Common myeloid progenitor, CD34-positive (primary cell): ENCODE measurements at regions of chr9 and their contacts with region 1.

Region 1: GRCh38 chr9:72871685-72872084 is 81.2 kb downstream of the ALDH1A1 start:
- DNase-seq: peak; percentile 29 to 62 (median 47)
- H3K4me3 ChIP-seq: peak overlapping the region in 2 of 7 experiments; percentile 24 to 51
- H3K27ac ChIP-seq: no peak overlapping the region
- H3K4me1 ChIP-seq: peaks cover 0 to 3% (median 0%) of the 10 kb centered on the region in 4 experiments
- H3K27me3 ChIP-seq: no peaks in the 10 kb centered on the region

Region 2: GRCh38 chr9:72807765-72808445 is 63.8 kb before region 1 on chr9:
- CTCF ChIA-PET with region 1: no interaction called
- POLR2A ChIA-PET with region 1: no interaction called
- DNase-seq: no peak
- H3K4me3 ChIP-seq: no peak overlapping the region
- H3K27ac ChIP-seq: no peak overlapping the region
- H3K4me1 ChIP-seq: no peaks in the 10 kb centered on the region
- H3K27me3 ChIP-seq: no peaks in the 10 kb centered on the region

Region 3: GRCh38 chr9:72856972-72857623 is 14.6 kb before region 1 on chr9:
- CTCF ChIA-PET with region 1: interaction called, 22 read pairs
- POLR2A ChIA-PET with region 1: no interaction called
- DNase-seq: peak; percentile 72 to 86 (median 80)
- H3K4me3 ChIP-seq: no peak overlapping the region
- H3K27ac ChIP-seq: no peak overlapping the region
- H3K4me1 ChIP-seq: peaks cover 0 to 4% (median 2%) of the 10 kb centered on the region in 4 experiments
- H3K27me3 ChIP-seq: no peaks in the 10 kb centered on the region

Region 4: GRCh38 chr9:73023025-73023541 is 151.4 kb after region 1 on chr9:
- CTCF ChIA-PET with region 1: interaction called, 31 read pairs
- POLR2A ChIA-PET with region 1: no interaction called
- DNase-seq: peak; percentile 84 to 89 (median 87)
- H3K4me3 ChIP-seq: no peak overlapping the region
- H3K27ac ChIP-seq: no peak overlapping the region
- H3K4me1 ChIP-seq: peaks cover 3 to 10% (median 3%) of the 10 kb centered on the region in 4 experiments
- H3K27me3 ChIP-seq: no peaks in the 10 kb centered on the region

Region 5: GRCh38 chr9:73038613-73039012 is 166.9 kb after region 1 on chr9:
- CTCF ChIA-PET with region 1: interaction called, 10 read pairs
- POLR2A ChIA-PET with region 1: interaction called, 4 read pairs
- DNase-seq: no peak
- H3K4me3 ChIP-seq: no peak overlapping the region
- H3K27ac ChIP-seq: no peak overlapping the region
- H3K4me1 ChIP-seq: no peaks in the 10 kb centered on the region
- H3K27me3 ChIP-seq: no peaks in the 10 kb centered on the region

Region 6: DNA sequence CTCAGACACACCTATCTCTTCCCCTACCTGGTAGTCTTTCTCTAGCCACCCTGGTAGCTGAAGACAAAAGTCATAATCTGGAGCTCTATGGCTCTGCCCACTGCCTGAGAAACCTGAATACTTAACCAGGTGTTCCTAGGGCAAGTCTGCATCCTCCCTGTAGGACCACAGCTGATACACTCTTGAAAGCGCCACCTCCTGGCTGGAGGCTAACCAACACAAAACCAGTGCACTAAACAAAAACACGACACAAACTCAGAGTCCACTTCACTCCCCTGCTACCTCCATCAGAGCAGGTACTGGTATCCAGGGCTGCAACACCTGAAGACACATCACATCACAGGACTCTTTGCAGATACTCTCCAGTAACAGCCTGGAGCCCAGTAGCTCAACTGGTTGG is 195.4 kb after region 1 on chr9:
- CTCF ChIA-PET with region 1: interaction called, 12 read pairs
- POLR2A ChIA-PET with region 1: no interaction called
- DNase-seq: peak in 1 of 3 donors; percentile 9
- H3K4me3 ChIP-seq: no peak overlapping the region
- H3K27ac ChIP-seq: no peak overlapping the region
- H3K4me1 ChIP-seq: no peaks in the 10 kb centered on the region
- H3K27me3 ChIP-seq: no peaks in the 10 kb centered on the region

Region 7: GRCh38 chr9:73081979-73082657 is 210.4 kb after region 1 on chr9:
- CTCF ChIA-PET with region 1: interaction called, 32 read pairs
- POLR2A ChIA-PET with region 1: no interaction called
- DNase-seq: peak; percentile 59 to 80 (median 73)
- H3K4me3 ChIP-seq: no peak overlapping the region
- H3K27ac ChIP-seq: no peak overlapping the region
- H3K4me1 ChIP-seq: no peaks in the 10 kb centered on the region
- H3K27me3 ChIP-seq: no peaks in the 10 kb centered on the region